HepG2 (cell line): ENCODE measurements at regions of chr18 and their contacts with region 1.

Region 1: GRCh38 chr18:2906704-2907549 is 60.1 kb downstream of the EMILIN2 start:
- DNase-seq: peak; percentile 12
- ATAC-seq: peak; percentile 60
- H3K4me3 ChIP-seq: peak overlapping the region; percentile 81 to 89 (median 86)
- H3K27ac ChIP-seq: peak overlapping the region; percentile 80
- H3K4me1 ChIP-seq: peaks cover 24% of the 10 kb centered on the region
- H3K27me3 ChIP-seq: peaks cover 0 to 20% of the 10 kb centered on the region in 2 experiments; a peak in 3 of 5 replicates
- CTCF ChIP-seq: no peak; the same call in 1 of the 2 replicates
- EP300 ChIP-seq: no peak
- POLR2A ChIP-seq: peak in 1 of 2 experiments; percentile 45; a peak in 3 of 4 replicates
- RAD21 ChIP-seq: peak; percentile 62

Region 2: GRCh38 chr18:2442791-2443398 is 464.0 kb before region 1 on chr18:
- CTCF ChIA-PET with region 1: no interaction called
- POLR2A ChIA-PET with region 1: no interaction called
- in situ Hi-C with region 1: no loop called
- intact Hi-C with region 1: no loop called
- DNase-seq: no peak
- ATAC-seq: no peak
- H3K4me3 ChIP-seq: no peak overlapping the region
- H3K27ac ChIP-seq: no peak overlapping the region
- H3K4me1 ChIP-seq: no peaks in the 10 kb centered on the region
- H3K27me3 ChIP-seq: no peaks in the 10 kb centered on the region; a peak in 1 of 5 replicates
- CTCF ChIP-seq: no peak
- EP300 ChIP-seq: no peak
- POLR2A ChIP-seq: no peak
- RAD21 ChIP-seq: no peak

Region 3: DNA sequence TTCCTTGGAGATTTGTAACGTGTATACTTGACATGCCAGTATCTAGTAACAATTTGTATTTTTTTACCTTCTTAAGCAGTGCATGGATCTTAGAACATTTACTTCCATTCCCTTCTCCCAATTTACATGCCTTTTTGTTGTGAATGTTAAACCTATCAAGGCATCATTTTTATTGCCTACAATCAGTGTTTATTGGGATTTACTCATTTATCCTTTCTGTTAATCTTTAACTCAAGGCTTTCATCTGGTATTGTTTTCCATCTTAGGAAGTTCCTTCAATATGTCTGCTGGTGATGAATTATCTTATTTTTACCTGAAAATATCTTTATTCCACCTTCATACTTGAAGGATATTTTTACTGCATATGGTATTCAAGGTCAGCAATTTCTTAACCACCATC is 148.6 kb before region 1 on chr18:
- CTCF ChIA-PET with region 1: no interaction called
- POLR2A ChIA-PET with region 1: no interaction called
- in situ Hi-C with region 1: no loop called
- intact Hi-C with region 1: loop called (anchors 10 kb)
- DNase-seq: no peak
- ATAC-seq: no peak
- H3K4me3 ChIP-seq: no peak overlapping the region
- H3K27ac ChIP-seq: no peak overlapping the region
- H3K4me1 ChIP-seq: no peaks in the 10 kb centered on the region
- H3K27me3 ChIP-seq: no peaks in the 10 kb centered on the region
- CTCF ChIP-seq: no peak
- EP300 ChIP-seq: no peak
- POLR2A ChIP-seq: no peak
- RAD21 ChIP-seq: no peak

Region 4: DNA sequence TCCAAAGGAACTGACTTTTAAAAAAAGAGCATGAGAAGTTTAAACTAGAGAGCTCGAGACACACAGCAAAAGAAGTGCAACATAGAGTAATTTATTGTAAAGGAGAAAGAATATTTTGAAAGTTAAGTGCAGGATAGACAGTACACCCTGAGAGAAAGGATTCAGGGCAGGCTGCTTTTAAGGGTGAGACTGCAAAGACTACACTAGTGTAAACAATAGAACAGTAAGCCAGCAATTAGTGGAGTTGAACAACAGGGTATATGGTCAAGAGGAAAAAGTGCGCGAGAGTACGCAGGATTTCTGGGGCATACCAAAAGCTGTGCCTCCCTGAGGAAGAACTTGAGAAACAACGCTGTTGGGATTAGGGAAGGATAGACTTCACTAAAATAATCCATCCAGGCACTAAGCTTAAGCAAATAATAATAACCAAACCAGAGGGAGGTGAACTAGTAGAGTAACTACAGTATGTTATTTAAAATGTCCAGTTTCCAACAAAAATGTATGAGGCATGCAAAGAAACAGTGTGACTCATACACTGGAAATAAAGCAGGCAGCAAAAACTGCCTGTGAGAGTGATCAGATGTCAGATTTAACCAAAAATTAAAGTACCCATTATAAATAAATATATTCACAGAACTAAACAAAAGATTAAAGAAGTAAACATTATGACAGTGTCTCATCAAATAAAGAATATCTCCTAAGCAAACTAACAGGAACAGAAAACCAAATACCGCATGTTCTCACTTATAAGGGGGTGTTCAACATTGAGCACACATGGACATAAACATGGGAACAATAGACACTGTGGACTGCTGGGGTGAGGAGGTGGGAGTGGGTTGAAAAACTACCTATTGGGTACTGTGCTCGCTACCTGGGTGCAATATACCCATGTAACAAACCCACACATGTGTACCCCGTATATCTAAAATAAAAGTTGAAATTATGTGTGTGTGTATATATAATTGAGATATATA is 100.7 kb before region 1 on chr18:
- CTCF ChIA-PET with region 1: no interaction called
- POLR2A ChIA-PET with region 1: no interaction called
- in situ Hi-C with region 1: no loop called
- intact Hi-C with region 1: loop called (anchors 5 kb)
- DNase-seq: no peak
- ATAC-seq: 0 out of 3 replicates have a peak, but pooled peaks have one; percentile 39
- H3K4me3 ChIP-seq: no peak overlapping the region
- H3K27ac ChIP-seq: no peak overlapping the region
- H3K4me1 ChIP-seq: peaks cover 6% of the 10 kb centered on the region; the same call in 1 of the 2 replicates
- H3K27me3 ChIP-seq: no peaks in the 10 kb centered on the region; a peak in 1 of 5 replicates
- CTCF ChIP-seq: no peak
- EP300 ChIP-seq: no peak
- POLR2A ChIP-seq: no peak
- RAD21 ChIP-seq: no peak

Region 5: GRCh38 chr18:2948038-2948437 is 41.1 kb after region 1 on chr18:
- CTCF ChIA-PET with region 1: no interaction called
- POLR2A ChIA-PET with region 1: no interaction called
- in situ Hi-C with region 1: no loop called
- intact Hi-C with region 1: no loop called
- DNase-seq: peak; percentile 23
- ATAC-seq: peak; percentile 74
- H3K4me3 ChIP-seq: no peak overlapping the region
- H3K27ac ChIP-seq: no peak overlapping the region
- H3K4me1 ChIP-seq: no peaks in the 10 kb centered on the region
- H3K27me3 ChIP-seq: no peaks in the 10 kb centered on the region
- CTCF ChIP-seq: peak; percentile 30
- EP300 ChIP-seq: no peak
- POLR2A ChIP-seq: no peak
- RAD21 ChIP-seq: no peak

Region 6: DNA sequence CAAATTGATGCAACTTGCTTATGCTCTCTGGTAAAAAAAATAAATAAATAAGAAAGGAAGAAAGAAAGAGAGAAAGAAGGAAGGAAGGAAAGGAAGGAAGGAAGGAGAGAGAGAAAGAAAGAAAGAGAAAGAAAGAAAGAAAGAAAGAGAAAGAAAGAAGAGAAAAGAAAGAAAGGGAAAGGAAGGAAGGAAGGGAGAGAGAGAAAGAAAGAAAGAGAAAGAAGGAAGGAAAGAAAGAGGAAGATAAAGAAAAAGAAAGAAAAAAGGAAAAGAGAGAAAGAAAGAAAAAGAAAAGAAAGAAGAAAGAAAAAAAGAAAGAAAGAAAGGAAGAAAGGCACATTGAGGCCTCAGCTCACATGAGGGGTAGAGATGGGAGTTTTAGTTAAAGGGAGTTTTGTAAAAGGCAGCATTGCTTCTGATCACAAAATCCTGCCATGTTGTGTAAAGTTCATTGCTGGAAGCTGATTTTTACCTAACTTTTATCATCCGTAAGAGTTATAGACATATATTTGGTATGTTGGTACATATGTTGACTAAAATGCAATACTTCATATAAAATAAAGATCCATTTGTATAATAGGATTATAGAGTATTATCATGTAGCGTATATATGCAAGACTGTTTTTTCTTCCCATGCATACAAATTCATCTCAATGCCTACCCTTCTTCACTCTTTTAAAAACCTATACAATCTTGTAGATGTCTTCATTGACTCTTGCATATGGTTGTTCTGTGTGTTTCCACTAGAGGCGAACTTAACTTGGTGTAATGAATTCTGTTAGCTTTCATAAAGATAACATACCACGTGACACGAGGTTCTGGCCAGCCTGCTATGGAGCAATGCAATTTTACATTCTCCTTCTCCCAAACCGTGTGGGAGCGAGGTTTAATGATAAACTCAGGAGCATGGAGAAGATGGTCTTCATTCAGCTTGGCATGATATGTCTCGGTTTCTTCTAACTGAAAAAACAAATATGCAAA is 280.0 kb after region 1 on chr18:
- CTCF ChIA-PET with region 1: no interaction called
- POLR2A ChIA-PET with region 1: no interaction called
- in situ Hi-C with region 1: no loop called
- intact Hi-C with region 1: no loop called
- DNase-seq: peak; percentile 59
- ATAC-seq: peak; percentile 64
- H3K4me3 ChIP-seq: no peak overlapping the region
- H3K27ac ChIP-seq: no peak overlapping the region
- H3K4me1 ChIP-seq: peaks cover 27% of the 10 kb centered on the region
- H3K27me3 ChIP-seq: no peaks in the 10 kb centered on the region
- CTCF ChIP-seq: no peak
- EP300 ChIP-seq: no peak
- POLR2A ChIP-seq: no peak
- RAD21 ChIP-seq: no peak